ENCODE measurements at regions of chr6 and their contacts with region 1.

Region 1: DNA sequence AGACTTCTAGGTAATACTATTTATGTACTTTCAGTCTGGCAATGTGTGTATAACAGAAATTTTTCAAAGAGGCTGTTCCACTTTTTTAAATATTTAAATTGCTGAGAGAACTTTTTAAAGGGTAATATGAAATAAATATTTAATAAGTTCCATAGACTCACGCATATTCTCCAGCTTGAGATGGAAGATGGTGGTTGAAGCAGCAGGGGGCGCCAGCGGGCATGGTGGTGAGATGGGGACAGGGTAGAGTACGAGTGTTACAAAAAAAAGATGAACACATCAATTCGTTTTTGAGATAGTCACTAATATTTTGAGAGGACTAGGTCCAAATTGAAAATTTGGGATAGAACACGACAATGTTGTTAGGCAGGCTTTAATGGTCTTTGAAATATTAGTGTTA is 68.4 kb downstream of the RSPO3 start:
- DNase-seq: peak; percentile 78
- H3K4me3 Mint-ChIP-seq: no peak overlapping the region
- H3K27ac Mint-ChIP-seq: no peak overlapping the region
- H3K4me1 Mint-ChIP-seq: no peaks in the 10 kb centered on the region
- H3K27me3 Mint-ChIP-seq: no peaks in the 10 kb centered on the region

Region 2: GRCh38 chr6:127051571-127052260 is 135.2 kb before region 1 on chr6:
- CTCF ChIA-PET with region 1: no interaction called
- POLR2A ChIA-PET with region 1: no interaction called
- intact Hi-C with region 1: no loop called
- DNase-seq: no peak
- H3K4me3 Mint-ChIP-seq: no peak overlapping the region
- H3K27ac Mint-ChIP-seq: no peak overlapping the region
- H3K4me1 Mint-ChIP-seq: peaks cover 2% of the 10 kb centered on the region
- H3K27me3 Mint-ChIP-seq: no peaks in the 10 kb centered on the region

Region 3: DNA sequence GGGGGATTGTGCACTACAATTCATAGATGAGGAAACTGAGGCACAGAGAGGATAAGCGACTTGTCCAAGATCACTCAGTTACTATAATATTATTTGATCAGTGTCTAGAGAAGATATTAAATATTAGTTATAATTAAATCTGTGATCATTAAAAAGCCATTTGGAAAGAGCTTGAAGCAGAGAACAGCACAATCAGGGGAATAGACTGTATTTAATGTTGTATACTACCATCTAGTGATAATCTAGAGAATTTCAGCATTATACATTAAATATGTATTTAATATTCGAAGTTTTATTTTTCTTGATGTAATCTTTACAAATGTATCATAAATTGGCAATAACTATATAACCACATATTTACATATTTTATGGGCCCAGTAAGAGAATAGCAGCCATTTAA is 352.4 kb after region 1 on chr6:
- CTCF ChIA-PET with region 1: interaction called, 8 read pairs
- POLR2A ChIA-PET with region 1: no interaction called
- intact Hi-C with region 1: loop called (anchors 1 kb)
- DNase-seq: no peak
- H3K4me3 Mint-ChIP-seq: no peak overlapping the region
- H3K27ac Mint-ChIP-seq: no peak overlapping the region
- H3K4me1 Mint-ChIP-seq: peaks cover 3% of the 10 kb centered on the region
- H3K27me3 Mint-ChIP-seq: peaks cover 13% of the 10 kb centered on the region

Measured in activated CD4-positive, alpha-beta memory T cell treated with anti-CD3 and anti-CD28 coated beads for 36 hours (primary cell).